Activated CD4-positive, alpha-beta memory T cell treated with anti-CD3 and anti-CD28 coated beads for 36 hours (primary cell): ENCODE measurements at regions of chr9 and their contacts with region 1.

Region 1: GRCh38 chr9:99184475-99185347 is 37.0 kb downstream of the ALG2 start:
- DNase-seq: peak; percentile 86
- H3K4me3 Mint-ChIP-seq: no peak overlapping the region
- H3K27ac Mint-ChIP-seq: no peak overlapping the region
- H3K4me1 Mint-ChIP-seq: peaks cover 33% of the 10 kb centered on the region
- H3K27me3 Mint-ChIP-seq: no peaks in the 10 kb centered on the region

Region 2: DNA sequence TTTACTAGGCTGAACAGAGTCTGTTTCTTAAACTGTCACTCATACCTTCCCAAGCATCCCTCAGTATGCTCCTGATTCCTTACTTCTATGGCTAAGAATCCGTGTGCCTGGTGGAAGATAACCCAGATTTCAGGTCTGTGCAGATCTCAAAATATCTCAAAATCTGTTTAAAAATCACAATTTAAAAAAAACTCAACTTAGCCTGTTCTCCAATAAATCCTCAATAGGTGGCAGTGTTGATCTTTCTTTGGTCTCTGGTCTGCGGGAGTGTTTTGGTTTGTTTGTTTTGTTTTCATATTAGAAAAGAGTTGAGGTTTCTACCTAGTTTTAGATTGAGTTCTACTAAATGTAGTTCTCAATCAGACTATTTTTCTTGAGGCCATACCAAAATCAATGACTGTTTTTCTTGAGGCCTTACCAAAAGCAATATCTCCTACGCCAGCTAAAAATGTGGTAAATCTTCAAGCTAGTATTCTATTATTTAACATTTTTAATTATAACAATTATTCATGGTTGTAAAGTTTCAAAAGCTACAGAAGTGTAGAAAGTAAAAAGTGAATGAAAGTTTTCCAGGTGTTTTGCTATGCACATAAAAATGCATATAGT is 21.8 kb before region 1 on chr9:
- CTCF ChIA-PET with region 1: interaction called, 35 read pairs
- POLR2A ChIA-PET with region 1: no interaction called
- intact Hi-C with region 1: loop called (anchors 2 kb)
- DNase-seq: no peak
- H3K4me3 Mint-ChIP-seq: no peak overlapping the region
- H3K27ac Mint-ChIP-seq: no peak overlapping the region
- H3K4me1 Mint-ChIP-seq: peaks cover 10% of the 10 kb centered on the region
- H3K27me3 Mint-ChIP-seq: peaks cover 4% of the 10 kb centered on the region

Region 3: DNA sequence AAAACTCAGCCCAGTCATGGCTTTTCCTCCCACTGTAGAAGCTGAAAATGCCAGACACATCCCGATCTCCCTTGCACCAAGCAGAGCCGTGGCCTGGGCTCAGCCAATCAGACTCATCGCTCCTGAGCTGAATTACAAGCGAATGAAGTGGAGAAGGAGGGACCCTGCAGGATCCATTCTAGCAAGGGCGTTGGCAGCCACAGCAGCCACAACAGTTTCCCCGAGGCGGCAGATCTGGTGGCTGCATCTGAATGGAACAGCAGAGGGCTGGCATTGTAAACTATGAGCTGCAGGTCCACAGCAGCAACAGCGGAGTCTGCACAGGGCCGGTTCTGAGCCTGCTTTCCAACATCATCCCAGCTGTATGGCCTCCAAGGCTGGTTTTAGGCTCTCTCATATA is 13.3 kb after region 1 on chr9:
- CTCF ChIA-PET with region 1: interaction called, 13 read pairs
- POLR2A ChIA-PET with region 1: interaction called, 4 read pairs
- intact Hi-C with region 1: no loop called
- DNase-seq: no peak
- H3K4me3 Mint-ChIP-seq: no peak overlapping the region
- H3K27ac Mint-ChIP-seq: no peak overlapping the region
- H3K4me1 Mint-ChIP-seq: no peaks in the 10 kb centered on the region
- H3K27me3 Mint-ChIP-seq: no peaks in the 10 kb centered on the region

Region 4: GRCh38 chr9:99253772-99254431 is 69.2 kb after region 1 on chr9:
- CTCF ChIA-PET with region 1: no interaction called
- POLR2A ChIA-PET with region 1: no interaction called
- intact Hi-C with region 1: loop called (anchors 1 kb)
- DNase-seq: peak; percentile 95
- H3K4me3 Mint-ChIP-seq: peak overlapping the region; percentile 46
- H3K27ac Mint-ChIP-seq: peak overlapping the region; percentile 90
- H3K4me1 Mint-ChIP-seq: peaks cover 43% of the 10 kb centered on the region
- H3K27me3 Mint-ChIP-seq: peaks cover 8% of the 10 kb centered on the region

Region 5: GRCh38 chr9:100216178-100216787 is 1031.6 kb after region 1 on chr9:
- CTCF ChIA-PET with region 1: no interaction called
- POLR2A ChIA-PET with region 1: no interaction called
- intact Hi-C with region 1: loop called (anchors 10 kb)
- DNase-seq: peak; percentile 76
- H3K4me3 Mint-ChIP-seq: no peak overlapping the region
- H3K27ac Mint-ChIP-seq: no peak overlapping the region
- H3K4me1 Mint-ChIP-seq: peaks cover 2% of the 10 kb centered on the region
- H3K27me3 Mint-ChIP-seq: no peaks in the 10 kb centered on the region

Region 6: GRCh38 chr9:100437860-100438805 is 1253.4 kb after region 1 on chr9:
- CTCF ChIA-PET with region 1: no interaction called
- POLR2A ChIA-PET with region 1: no interaction called
- intact Hi-C with region 1: loop called (anchors 10 kb)
- DNase-seq: peak; percentile 68
- H3K4me3 Mint-ChIP-seq: no peak overlapping the region
- H3K27ac Mint-ChIP-seq: no peak overlapping the region
- H3K4me1 Mint-ChIP-seq: no peaks in the 10 kb centered on the region
- H3K27me3 Mint-ChIP-seq: no peaks in the 10 kb centered on the region